Sigmoid colon (tissue), 7 donors: ENCODE measurements at regions of chr2 and their contacts with region 1.

Region 1: DNA sequence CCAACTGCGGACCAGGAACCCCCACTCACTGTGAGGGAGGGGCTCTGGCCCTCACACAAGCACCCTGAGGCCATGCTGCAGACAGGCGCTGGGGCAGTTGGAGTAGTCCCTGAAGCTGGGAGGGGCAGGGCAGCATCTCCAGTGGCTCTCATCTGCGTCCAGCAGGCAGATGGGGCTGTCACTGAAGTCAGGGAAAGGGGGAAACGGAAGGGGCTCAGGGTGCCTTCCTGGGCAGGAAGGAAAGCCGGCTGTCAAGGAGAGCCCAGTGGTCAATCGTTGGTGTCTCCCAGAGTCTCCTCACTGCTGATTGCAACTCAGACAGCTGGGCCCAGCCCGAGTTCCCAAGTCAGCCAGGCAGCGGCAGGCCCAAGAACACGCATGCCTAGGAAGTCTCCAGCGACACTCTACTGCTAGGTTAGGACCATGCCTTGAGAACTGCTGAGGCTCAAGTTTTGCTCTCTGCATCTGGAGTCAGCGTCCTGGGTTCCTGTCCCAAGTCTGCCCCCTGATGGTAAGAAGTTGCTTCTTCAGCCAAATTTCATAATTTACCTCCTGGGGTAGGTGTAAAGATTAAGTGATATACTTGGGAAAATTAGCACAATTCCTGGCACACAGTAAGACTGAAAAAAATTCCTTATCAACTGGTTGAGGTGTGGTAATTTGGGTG is 27.5 kb upstream of the NMUR1 start:
- DNase-seq: peak; percentile 89
- H3K4me3 ChIP-seq: no peak overlapping the region
- H3K27ac ChIP-seq: peak overlapping the region; percentile 38 to 65 (median 52)
- H3K4me1 ChIP-seq: peaks cover 0 to 20% (median 12%) of the 10 kb centered on the region in 4 donors
- H3K27me3 ChIP-seq: no peaks in the 10 kb centered on the region
- CTCF ChIP-seq: peak in 3 of 4 experiments; percentile 70 to 82 (median 72)
- EP300 ChIP-seq: no peak
- POLR2A ChIP-seq: no peak

Region 2: DNA sequence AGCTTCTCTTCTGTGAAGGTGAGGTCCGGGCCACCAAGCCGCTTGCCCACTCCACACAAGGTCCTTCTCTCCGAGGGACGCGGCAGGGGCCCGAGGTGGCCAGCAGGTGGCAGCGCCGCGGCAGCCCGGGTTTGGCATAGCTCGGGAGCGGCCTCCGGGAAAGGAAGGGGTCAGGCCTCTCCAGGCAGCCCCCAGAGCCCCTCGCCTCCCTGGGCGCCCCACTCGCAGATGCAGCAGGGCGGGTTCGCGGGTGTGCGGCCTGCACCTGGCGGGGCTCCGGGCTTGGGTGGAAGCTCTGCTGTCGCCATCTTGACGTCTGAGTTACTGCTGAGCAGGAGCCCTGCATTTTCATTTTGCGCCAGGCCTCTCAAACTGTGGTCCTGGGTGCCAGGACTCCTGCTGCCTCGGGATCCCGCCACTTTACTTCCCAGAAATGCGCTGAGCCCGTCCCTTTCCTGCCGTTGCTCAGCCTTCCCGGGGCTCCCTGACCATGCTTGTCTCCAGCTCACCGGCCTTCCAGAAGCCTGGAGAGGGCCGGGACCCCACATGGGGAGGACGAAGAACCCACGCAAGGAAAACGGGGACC is 74.8 kb before region 1 on chr2:
- intact Hi-C with region 1: loop called (anchors 1 kb)
- DNase-seq: peak; percentile 85
- H3K4me3 ChIP-seq: peak overlapping the region; percentile 18 to 49 (median 48)
- H3K27ac ChIP-seq: peak overlapping the region; percentile 70 to 79 (median 74)
- H3K4me1 ChIP-seq: peaks cover 0 to 17% (median 12%) of the 10 kb centered on the region in 4 donors
- H3K27me3 ChIP-seq: no peaks in the 10 kb centered on the region
- CTCF ChIP-seq: peak; percentile 72 to 94 (median 84)
- EP300 ChIP-seq: no peak
- POLR2A ChIP-seq: peak in 1 of 2 donors; percentile 13

Region 3: GRCh38 chr2:231530091-231531011 is 27.4 kb before region 1 on chr2 and contains the start of gene NMUR1:
- intact Hi-C with region 1: loop called (anchors 1 kb)
- DNase-seq: peak; percentile 76
- H3K4me3 ChIP-seq: peak within 1 kb of the TSS; percentile 24 to 52 (median 46)
- H3K27ac ChIP-seq: no peak within 1 kb of the TSS
- H3K4me1 ChIP-seq: peaks cover 0 to 11% (median 8%) of the 10 kb centered on the region in 4 donors
- H3K27me3 ChIP-seq: peaks cover 6 to 14% (median 6%) of the 10 kb centered on the region in 3 donors
- CTCF ChIP-seq: peak in 3 of 4 experiments; percentile 9 to 82 (median 40)
- EP300 ChIP-seq: no peak
- POLR2A ChIP-seq: no peak
- total RNA-seq, gene NMUR1: 0.14 to 0.36 (median 0.16) TPM in 3 of 4 donors, not detected in the other

Region 4: GRCh38 chr2:231640641-231641135 is 83.0 kb after region 1 on chr2:
- intact Hi-C with region 1: no loop called
- DNase-seq: peak; percentile 81
- H3K4me3 ChIP-seq: no peak overlapping the region
- H3K27ac ChIP-seq: peak overlapping the region; percentile 70 to 96 (median 78)
- H3K4me1 ChIP-seq: peaks cover 0 to 31% (median 29%) of the 10 kb centered on the region in 4 donors
- H3K27me3 ChIP-seq: no peaks in the 10 kb centered on the region
- CTCF ChIP-seq: no peak
- EP300 ChIP-seq: no peak
- POLR2A ChIP-seq: no peak